ENCODE measurements at regions of chr14 and their contacts with region 1.

Region 1: DNA sequence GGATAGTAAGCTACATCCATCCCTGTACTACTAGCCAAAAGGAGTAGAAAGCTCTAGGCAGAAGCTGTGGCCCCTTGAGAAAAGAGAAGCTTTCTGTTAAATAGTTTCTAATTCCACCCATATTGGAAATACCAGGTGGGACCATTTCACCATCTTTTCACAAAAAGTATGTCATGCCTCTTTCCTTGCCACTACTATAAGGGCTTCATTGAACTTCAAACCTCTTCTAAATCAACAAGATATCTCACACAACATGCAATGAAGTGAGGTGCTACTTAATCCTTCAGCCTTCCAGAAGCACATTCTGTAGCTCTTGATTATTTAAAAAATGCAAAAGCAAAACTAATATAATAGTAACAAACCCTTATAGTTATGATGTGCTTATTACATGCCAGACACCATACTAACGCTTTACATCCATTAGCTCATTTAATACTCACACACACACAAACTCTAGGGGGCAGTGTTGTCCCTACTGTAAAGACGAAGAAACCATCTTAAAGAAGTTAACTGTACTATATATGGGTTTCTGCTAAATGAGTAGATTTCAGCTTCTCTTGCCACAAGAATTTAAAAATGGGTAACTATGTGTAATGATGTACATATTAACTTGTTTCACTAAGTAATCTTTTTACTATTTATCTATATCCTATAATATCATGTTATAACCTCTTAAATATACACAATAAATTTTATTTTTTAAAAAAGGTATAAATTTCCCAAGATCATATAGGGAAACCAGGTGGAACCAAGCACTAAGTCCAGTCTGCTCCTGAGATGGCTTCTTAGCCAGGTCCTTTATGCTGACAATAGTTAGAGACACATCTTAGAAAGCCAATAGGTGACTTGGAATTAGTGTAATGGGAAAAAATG is 124.4 kb downstream of the RPS29 start:
- DNase-seq: peak; percentile 33
- H3K4me3 ChIP-seq: no peak overlapping the region
- CTCF ChIP-seq: peak; percentile 66

Region 2: DNA sequence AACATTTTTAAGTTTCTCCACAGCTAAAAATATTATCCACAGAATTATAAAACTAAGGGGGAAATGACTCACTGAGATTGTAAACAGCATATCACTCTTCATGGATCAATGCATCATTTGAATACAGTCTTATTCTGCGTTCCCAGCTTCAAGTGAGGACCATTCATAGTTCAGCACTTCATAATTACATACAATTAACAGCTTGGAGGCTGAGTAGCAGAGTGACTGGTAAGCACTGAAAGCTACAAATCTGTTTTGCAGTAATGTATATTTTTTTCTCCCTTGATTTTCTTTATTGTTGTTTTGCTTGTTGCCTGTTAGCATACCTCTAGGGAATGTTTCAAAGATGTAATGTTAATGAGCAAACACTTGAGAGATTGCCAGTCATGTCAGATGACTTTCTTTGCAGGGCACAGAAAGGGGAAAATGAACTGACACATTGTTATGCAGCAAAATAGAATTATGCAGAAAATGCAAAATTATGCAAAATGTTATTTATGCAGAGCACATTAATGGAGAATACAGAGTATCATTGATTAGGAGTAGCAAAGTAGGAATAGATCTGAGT is 14.1 kb before region 1 on chr14:
- CTCF ChIA-PET with region 1: interaction called, 44 read pairs
- POLR2A ChIA-PET with region 1: no interaction called
- DNase-seq: no peak
- H3K4me3 ChIP-seq: no peak overlapping the region
- CTCF ChIP-seq: no peak

Region 3: DNA sequence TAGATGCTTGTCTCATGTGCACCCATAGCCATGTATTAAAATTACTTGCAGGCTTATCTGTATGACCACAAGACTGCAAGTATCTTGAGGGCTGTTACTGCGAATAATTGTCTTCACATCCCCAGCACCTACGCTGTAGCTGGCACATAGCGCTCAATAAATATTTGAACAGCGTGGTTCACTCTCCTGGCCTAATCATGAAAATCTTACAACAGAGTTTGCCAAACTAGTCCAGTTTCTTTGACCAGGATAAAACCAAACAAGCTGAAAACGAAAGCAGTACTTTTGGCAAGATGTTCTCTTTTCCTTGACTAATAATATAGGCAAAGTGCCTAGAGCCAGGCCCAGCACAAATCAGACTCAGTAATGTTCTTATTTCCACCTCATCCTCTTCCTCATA is 17.7 kb after region 1 on chr14:
- CTCF ChIA-PET with region 1: interaction called, 31 read pairs
- POLR2A ChIA-PET with region 1: no interaction called
- DNase-seq: no peak
- H3K4me3 ChIP-seq: no peak overlapping the region
- CTCF ChIP-seq: no peak

Region 4: DNA sequence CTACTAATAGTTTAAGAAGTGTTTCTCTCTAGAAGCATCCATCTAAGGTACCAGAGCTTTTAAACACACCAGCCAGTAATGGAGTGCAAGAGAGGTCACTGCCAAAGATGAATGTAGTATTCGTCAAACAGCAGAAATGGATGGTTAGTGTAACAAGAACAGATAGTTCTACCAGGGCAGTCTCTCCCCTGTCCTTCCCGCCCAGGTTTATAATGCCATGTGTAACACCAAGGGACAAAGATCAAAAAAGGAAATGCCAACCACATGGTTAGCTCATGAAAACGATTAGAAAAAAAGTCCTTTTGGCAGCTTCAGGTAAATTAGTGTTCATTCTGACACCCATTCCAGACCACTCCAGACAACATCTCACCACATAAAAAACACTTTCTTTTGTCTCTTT is 23.5 kb after region 1 on chr14:
- CTCF ChIA-PET with region 1: interaction called, 24 read pairs
- POLR2A ChIA-PET with region 1: no interaction called
- DNase-seq: no peak
- H3K4me3 ChIP-seq: no peak overlapping the region
- CTCF ChIP-seq: no peak

Region 5: GRCh38 chr14:49497725-49498348 is 36.1 kb after region 1 on chr14:
- CTCF ChIA-PET with region 1: interaction called, 111 read pairs
- POLR2A ChIA-PET with region 1: no interaction called
- DNase-seq: peak; percentile 14
- H3K4me3 ChIP-seq: no peak overlapping the region
- CTCF ChIP-seq: peak; percentile 57

Region 6: DNA sequence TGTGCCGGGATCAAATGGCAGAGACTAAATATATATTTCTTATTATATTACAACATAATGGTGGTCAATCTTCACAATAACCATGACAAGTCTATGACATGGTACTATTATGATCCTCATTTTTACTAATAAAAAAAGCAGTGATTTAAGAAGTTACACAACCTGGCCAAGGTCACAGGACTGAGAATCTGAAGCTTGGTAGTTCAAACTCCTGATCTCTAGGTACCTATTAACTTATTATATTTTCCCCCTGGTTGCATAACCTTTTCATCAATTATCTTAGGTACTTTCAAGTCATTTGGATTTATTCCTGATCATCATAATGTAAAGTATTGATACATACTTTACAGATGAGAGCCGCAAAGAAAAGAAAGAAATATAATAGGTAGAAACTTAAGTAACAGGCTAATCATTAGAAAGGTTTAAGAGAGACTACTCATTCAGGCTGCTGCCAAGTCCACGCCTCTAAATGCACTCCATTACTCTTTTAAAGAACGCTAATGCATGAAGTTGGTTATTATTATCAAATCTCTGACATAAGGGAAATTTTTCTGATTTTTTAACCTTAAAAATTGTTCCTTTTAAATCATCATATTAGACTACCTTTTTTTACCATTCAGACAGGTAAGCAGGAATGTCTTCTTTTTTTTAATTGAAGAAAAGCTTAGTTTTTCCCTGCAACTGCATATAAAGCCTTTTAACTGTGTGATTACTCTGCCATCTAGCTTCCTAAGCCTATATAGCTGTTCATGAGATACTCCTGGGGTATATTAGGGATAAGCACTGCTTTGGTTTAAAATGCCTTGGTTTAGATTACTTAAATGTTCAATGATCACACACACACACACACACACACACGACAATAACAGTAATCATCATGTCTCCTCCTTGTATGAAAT is 88.8 kb after region 1 on chr14:
- CTCF ChIA-PET with region 1: interaction called, 85 read pairs
- POLR2A ChIA-PET with region 1: no interaction called
- DNase-seq: no peak
- H3K4me3 ChIP-seq: no peak overlapping the region
- CTCF ChIP-seq: no peak